WTC11 (cell line): ENCODE measurements at regions of chr11 and their contacts with region 1.

Region 1: GRCh38 chr11:20000351-20001134 is 159.7 kb downstream of the DBX1 start:
- DNase-seq: peak; percentile 83
- ATAC-seq: peak; percentile 96
- H3K4me3 Mint-ChIP-seq: peak overlapping the region; percentile 40
- H3K27ac Mint-ChIP-seq: peak overlapping the region; percentile 89
- H3K4me1 Mint-ChIP-seq: peaks cover 58% of the 10 kb centered on the region
- H3K27me3 Mint-ChIP-seq: peaks cover 76% of the 10 kb centered on the region
- CTCF ChIP-seq: no peak

Region 2: DNA sequence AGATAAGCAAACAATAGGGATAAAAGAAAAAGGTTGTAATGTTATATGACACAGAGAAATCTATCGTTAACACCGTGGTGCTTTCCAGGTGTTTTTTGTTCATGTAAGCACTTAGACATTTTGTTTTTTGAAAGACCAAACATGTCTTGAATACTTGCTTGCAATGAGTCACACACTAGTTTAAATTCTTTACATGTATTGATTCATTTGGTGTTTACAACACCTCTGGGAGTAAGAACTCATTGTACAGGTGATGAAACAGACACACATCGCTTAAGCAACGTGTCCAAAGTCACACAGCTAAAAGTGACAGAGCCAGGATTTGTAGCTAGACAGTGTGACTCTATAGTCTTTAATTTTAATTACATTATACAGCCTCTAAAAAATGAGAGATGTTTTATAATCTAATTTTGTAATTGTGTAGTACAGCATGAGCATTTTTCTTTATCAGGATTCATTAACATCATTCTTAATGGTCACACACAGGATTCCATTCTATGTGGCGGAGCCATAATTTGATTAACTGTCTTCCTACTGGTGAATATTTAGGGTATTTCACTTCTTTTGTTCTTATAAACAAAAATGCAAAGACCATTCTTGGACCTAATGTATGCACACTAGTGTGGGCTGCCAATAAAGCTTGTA is 10.9 kb after region 1 on chr11:
- CTCF ChIA-PET with region 1: interaction called, 10 read pairs
- POLR2A ChIA-PET with region 1: no interaction called
- DNase-seq: no peak
- ATAC-seq: no peak
- H3K4me3 Mint-ChIP-seq: no peak overlapping the region
- H3K27ac Mint-ChIP-seq: no peak overlapping the region
- H3K4me1 Mint-ChIP-seq: peaks cover 27% of the 10 kb centered on the region
- H3K27me3 Mint-ChIP-seq: no peaks in the 10 kb centered on the region
- CTCF ChIP-seq: no peak

Region 3: DNA sequence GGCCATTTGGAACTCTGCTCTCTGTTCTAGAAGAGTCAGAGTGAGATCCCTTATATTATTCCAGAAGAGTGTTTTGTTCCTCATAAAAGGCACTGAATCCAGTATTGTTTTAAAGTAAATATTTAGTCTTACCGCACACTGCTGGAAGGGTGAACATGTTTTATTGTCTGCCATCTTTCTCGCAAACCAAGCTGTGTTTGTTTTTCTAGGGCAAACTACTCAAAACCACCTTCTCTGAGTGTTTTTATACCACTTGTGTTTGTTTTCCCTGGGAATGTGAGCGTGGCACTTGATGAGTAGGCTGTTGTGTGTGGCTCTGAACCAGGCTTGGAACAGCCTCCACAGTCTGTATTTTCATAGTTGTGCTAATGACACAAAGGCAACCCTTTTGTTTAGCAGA is 69.9 kb after region 1 on chr11:
- CTCF ChIA-PET with region 1: no interaction called
- POLR2A ChIA-PET with region 1: no interaction called
- DNase-seq: no peak
- ATAC-seq: no peak
- H3K4me3 Mint-ChIP-seq: no peak overlapping the region
- H3K27ac Mint-ChIP-seq: no peak overlapping the region
- H3K4me1 Mint-ChIP-seq: peaks cover 35% of the 10 kb centered on the region
- H3K27me3 Mint-ChIP-seq: no peaks in the 10 kb centered on the region; the same call in 1 of the 2 replicates
- CTCF ChIP-seq: no peak